ENCODE measurements at regions of chr2 and their contacts with region 1.

Region 1: GRCh38 chr2:10072656-10073480 is 7.3 kb downstream of the CYS1 start:
- DNase-seq: peak; percentile 71
- H3K4me3 ChIP-seq: no peak overlapping the region
- H3K27ac ChIP-seq: no peak overlapping the region
- H3K4me1 ChIP-seq: no peaks in the 10 kb centered on the region
- H3K27me3 ChIP-seq: no peaks in the 10 kb centered on the region
- CTCF ChIP-seq: peak; percentile 79 to 92

Region 2: DNA sequence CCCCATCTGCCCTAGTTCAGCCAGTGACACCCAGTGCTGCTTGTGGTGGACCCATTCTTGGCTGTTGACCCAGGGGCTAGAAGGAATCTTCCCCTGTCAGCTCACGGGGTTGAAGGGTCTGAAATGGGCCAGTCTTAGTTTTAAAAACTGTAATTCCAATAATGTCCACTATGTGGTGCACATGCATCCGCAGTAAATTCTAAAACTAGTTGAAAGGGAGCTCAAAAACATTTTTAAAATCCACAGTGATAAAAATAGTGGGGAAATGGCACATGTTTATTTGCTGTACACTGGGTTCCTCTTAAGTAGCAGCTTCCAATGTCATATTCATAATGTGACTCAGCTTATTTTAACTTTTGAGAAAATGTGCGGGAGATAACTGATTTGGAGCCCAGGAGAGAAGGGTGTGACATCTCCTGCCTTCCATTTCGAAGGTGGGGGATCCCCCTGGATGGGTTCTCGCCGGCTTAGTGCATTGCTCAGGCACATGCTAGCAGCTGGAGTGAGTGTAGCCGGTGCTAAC is 88.6 kb before region 1 on chr2:
- CTCF ChIA-PET with region 1: no interaction called
- dilution Hi-C with region 1: no loop called
- in situ Hi-C with region 1: no loop called
- intact Hi-C with region 1: no loop called
- DNase-seq: peak; percentile 11
- H3K4me3 ChIP-seq: no peak overlapping the region
- H3K27ac ChIP-seq: no peak overlapping the region
- H3K4me1 ChIP-seq: no peaks in the 10 kb centered on the region
- H3K27me3 ChIP-seq: no peaks in the 10 kb centered on the region
- CTCF ChIP-seq: peak; percentile 65 to 79

Region 3: GRCh38 chr2:10028988-10029874 is 43.6 kb before region 1 on chr2:
- CTCF ChIA-PET with region 1: no interaction called
- dilution Hi-C with region 1: no loop called
- in situ Hi-C with region 1: no loop called
- intact Hi-C with region 1: no loop called
- DNase-seq: no peak
- H3K4me3 ChIP-seq: no peak overlapping the region
- H3K27ac ChIP-seq: no peak overlapping the region
- H3K4me1 ChIP-seq: no peaks in the 10 kb centered on the region
- H3K27me3 ChIP-seq: no peaks in the 10 kb centered on the region
- CTCF ChIP-seq: no peak

Region 4: GRCh38 chr2:10122386-10123280 is 49.8 kb after region 1 on chr2 and contains the start of gene RRM2:
- CTCF ChIA-PET with region 1: no interaction called
- dilution Hi-C with region 1: no loop called
- in situ Hi-C with region 1: no loop called
- intact Hi-C with region 1: loop called (anchors 2 kb)
- DNase-seq: peak; percentile 88
- H3K4me3 ChIP-seq: peak within 1 kb of the TSS; percentile 43 to 93 (median 88)
- H3K27ac ChIP-seq: peak within 1 kb of the TSS; percentile 75
- H3K4me1 ChIP-seq: peaks cover 35% of the 10 kb centered on the region
- H3K27me3 ChIP-seq: no peaks in the 10 kb centered on the region
- CTCF ChIP-seq: no peak
- total RNA-seq, gene RRM2: 4.0 to 103 TPM

Region 5: GRCh38 chr2:10302479-10303180 is 229.8 kb after region 1 on chr2 and contains the start of gene HPCAL1:
- CTCF ChIA-PET with region 1: no interaction called
- dilution Hi-C with region 1: no loop called
- in situ Hi-C with region 1: no loop called
- intact Hi-C with region 1: loop called (anchors 1 kb)
- DNase-seq: peak; percentile 80
- H3K4me3 ChIP-seq: peak within 1 kb of the TSS; percentile 58 to 89 (median 87)
- H3K27ac ChIP-seq: no peak within 1 kb of the TSS
- H3K4me1 ChIP-seq: peaks cover 19% of the 10 kb centered on the region
- H3K27me3 ChIP-seq: no peaks in the 10 kb centered on the region
- CTCF ChIP-seq: peak; percentile 28 to 65
- total RNA-seq, gene HPCAL1: 26.3 to 82.8 TPM

Region 6: DNA sequence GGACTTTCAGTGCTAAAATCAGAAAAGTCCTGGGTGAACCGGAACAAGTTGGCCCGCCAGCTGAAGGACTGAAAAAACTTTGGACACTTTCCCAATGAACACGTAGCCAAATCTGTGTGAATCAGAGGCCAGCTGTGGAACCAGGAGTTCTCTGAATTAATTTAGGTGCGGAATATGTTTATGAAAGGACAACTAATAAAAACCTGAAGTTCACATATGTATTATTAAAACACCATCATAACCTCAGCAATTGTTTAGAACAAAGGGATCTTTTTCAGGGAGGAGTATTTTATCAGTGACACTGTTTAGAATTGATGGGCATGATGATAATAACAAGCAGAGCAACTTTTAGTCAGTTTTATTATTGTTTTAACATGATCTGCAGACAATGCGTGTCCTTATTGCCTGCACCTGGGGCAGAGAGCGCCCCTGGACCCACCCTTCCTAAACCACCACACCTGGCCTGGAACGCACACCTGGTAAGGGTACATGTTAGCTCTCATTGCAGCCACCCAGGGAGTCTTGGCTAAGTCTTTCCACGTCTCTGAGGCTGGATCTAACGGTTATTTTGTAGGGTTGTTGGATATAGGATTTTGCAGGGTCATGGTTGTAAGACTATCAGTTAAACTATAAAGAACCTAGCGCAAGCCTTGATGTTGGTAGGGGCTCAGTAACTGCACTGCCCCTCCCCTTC is 385.2 kb after region 1 on chr2:
- CTCF ChIA-PET with region 1: no interaction called
- dilution Hi-C with region 1: no loop called
- in situ Hi-C with region 1: no loop called
- intact Hi-C with region 1: no loop called
- DNase-seq: peak; percentile 90
- H3K4me3 ChIP-seq: no peak overlapping the region
- H3K27ac ChIP-seq: peak overlapping the region; percentile 56
- H3K4me1 ChIP-seq: peaks cover 36% of the 10 kb centered on the region
- H3K27me3 ChIP-seq: no peaks in the 10 kb centered on the region
- CTCF ChIP-seq: no peak

Region 7: GRCh38 chr2:10659898-10660568 is 587.2 kb after region 1 on chr2:
- CTCF ChIA-PET with region 1: no interaction called
- dilution Hi-C with region 1: no loop called
- in situ Hi-C with region 1: loop called in 1 of 2 experiments (anchors 25 kb)
- intact Hi-C with region 1: loop called (anchors 2 kb)
- DNase-seq: peak; percentile 52
- H3K4me3 ChIP-seq: no peak overlapping the region
- H3K27ac ChIP-seq: no peak overlapping the region
- H3K4me1 ChIP-seq: peaks cover 30% of the 10 kb centered on the region
- H3K27me3 ChIP-seq: no peaks in the 10 kb centered on the region
- CTCF ChIP-seq: peak; percentile 76 to 78

Measured in mammary epithelial cell (primary cell).